ENCODE measurements at regions of chr1 and their contacts with region 1.

Region 1: DNA sequence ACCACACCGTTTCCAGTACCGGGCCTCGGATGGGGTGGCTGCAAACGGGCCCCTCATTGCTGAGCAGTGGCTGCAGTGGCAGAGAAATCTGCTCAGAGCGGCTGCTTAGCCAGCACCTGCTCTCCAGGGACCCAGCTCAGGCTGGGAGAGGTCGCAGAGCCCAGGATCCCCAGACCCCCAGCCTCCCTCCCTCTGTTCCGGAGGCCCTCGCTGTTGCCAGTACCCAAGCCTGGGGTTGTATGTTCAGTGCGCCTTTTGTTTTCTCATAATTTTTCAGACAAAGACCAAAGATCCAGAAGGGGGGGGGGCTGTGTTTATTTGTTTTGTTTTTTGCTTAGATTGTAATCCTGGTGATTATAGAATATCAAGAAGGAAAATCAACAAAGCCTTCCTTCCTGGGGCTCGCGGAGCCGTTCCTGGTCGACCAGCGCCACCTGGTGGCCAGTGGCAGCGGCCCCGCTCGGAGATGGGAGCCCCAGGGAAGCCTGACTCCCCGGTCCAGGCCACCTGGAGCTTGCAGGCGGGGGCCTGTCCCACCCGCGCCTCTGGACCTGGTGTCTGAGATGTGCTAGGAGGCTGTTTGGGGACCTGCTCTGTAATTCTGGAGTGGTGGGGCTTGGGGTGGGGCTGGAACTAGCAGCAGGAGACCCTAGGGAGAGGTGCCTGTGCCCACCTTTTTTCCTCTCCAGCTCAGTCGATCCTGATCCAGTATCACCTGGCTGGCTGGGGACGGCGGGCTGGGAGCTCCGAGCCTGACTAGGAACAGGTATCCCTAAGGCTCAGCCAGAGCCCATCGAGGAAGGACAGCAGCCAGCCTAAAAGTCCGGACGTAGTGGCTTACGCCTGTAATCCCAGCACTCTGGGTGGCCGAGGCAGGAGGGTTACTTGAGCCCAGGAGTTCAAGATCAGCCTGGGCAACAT is 123.9 kb upstream of the VAMP3 start:
- DNase-seq: peak; percentile 4
- ATAC-seq: peak; percentile 87
- H3K4me3 ChIP-seq: no peak overlapping the region
- H3K27ac ChIP-seq: no peak overlapping the region
- H3K4me1 ChIP-seq: no peaks in the 10 kb centered on the region
- H3K27me3 ChIP-seq: no peaks in the 10 kb centered on the region
- CTCF ChIP-seq: peak; percentile 97

Region 2: GRCh38 chr1:7042322-7043190 is 604.7 kb before region 1 on chr1:
- CTCF ChIA-PET with region 1: interaction called, 10 read pairs
- POLR2A ChIA-PET with region 1: no interaction called
- in situ Hi-C with region 1: no loop called
- intact Hi-C with region 1: loop called (anchors 5 kb)
- DNase-seq: peak; percentile 15
- ATAC-seq: peak; percentile 71
- H3K4me3 ChIP-seq: no peak overlapping the region
- H3K27ac ChIP-seq: no peak overlapping the region
- H3K4me1 ChIP-seq: no peaks in the 10 kb centered on the region
- H3K27me3 ChIP-seq: no peaks in the 10 kb centered on the region
- CTCF ChIP-seq: peak; percentile 82

Region 3: GRCh38 chr1:7454052-7454815 is 193.0 kb before region 1 on chr1:
- CTCF ChIA-PET with region 1: no interaction called
- POLR2A ChIA-PET with region 1: no interaction called
- in situ Hi-C with region 1: no loop called
- intact Hi-C with region 1: loop called (anchors 10 kb)
- DNase-seq: no peak
- ATAC-seq: peak; percentile 69; the same call in 1 of the 2 replicates
- H3K4me3 ChIP-seq: no peak overlapping the region
- H3K27ac ChIP-seq: no peak overlapping the region
- H3K4me1 ChIP-seq: no peaks in the 10 kb centered on the region
- H3K27me3 ChIP-seq: no peaks in the 10 kb centered on the region
- CTCF ChIP-seq: no peak; the same call in 1 of the 2 replicates

Measured in Panc1 (cell line).